Heart left ventricle (tissue), 16 donors: ENCODE measurements at regions of chr1 and their contacts with region 1.

Region 1: GRCh38 chr1:203084588-203085502 is 967 bp downstream of the MYOG start:
- DNase-seq: no peak
- ATAC-seq: peak in 1 of 4 donors; percentile 10
- H3K4me3 ChIP-seq: no peak overlapping the region
- H3K27ac ChIP-seq: no peak overlapping the region
- H3K4me1 ChIP-seq: peaks cover 0 to 15% (median 0%) of the 10 kb centered on the region in 12 donors
- H3K27me3 ChIP-seq: no peaks in the 10 kb centered on the region
- CTCF ChIP-seq: peak in 6 of 12 donors; percentile 9 to 30 (median 20)
- POLR2A ChIP-seq: no peak

Region 2: GRCh38 chr1:203065191-203065590 is 19.7 kb before region 1 on chr1:
- intact Hi-C with region 1: loop called in 1 of 10 experiments (anchors 2 kb)
- DNase-seq: peak in 1 of 5 donors; percentile 7
- ATAC-seq: no peak
- H3K4me3 ChIP-seq: no peak overlapping the region
- H3K27ac ChIP-seq: peak overlapping the region in 7 of 12 donors; percentile 8 to 95 (median 35)
- H3K4me1 ChIP-seq: peaks cover 0 to 45% (median 24%) of the 10 kb centered on the region in 12 donors
- H3K27me3 ChIP-seq: no peaks in the 10 kb centered on the region
- CTCF ChIP-seq: no peak
- POLR2A ChIP-seq: no peak

Region 3: GRCh38 chr1:203101915-203102634 is 17.2 kb after region 1 on chr1:
- intact Hi-C with region 1: loop called in 1 of 10 experiments (anchors 1 kb)
- DNase-seq: no peak
- ATAC-seq: no peak
- H3K4me3 ChIP-seq: no peak overlapping the region
- H3K27ac ChIP-seq: no peak overlapping the region
- H3K4me1 ChIP-seq: peaks cover 0 to 6% (median 0%) of the 10 kb centered on the region in 12 donors
- H3K27me3 ChIP-seq: peaks cover 0 to 10% (median 0%) of the 10 kb centered on the region in 9 donors
- CTCF ChIP-seq: no peak
- POLR2A ChIP-seq: no peak